ENCODE measurements at regions of chr20 and their contacts with region 1.

Region 1: DNA sequence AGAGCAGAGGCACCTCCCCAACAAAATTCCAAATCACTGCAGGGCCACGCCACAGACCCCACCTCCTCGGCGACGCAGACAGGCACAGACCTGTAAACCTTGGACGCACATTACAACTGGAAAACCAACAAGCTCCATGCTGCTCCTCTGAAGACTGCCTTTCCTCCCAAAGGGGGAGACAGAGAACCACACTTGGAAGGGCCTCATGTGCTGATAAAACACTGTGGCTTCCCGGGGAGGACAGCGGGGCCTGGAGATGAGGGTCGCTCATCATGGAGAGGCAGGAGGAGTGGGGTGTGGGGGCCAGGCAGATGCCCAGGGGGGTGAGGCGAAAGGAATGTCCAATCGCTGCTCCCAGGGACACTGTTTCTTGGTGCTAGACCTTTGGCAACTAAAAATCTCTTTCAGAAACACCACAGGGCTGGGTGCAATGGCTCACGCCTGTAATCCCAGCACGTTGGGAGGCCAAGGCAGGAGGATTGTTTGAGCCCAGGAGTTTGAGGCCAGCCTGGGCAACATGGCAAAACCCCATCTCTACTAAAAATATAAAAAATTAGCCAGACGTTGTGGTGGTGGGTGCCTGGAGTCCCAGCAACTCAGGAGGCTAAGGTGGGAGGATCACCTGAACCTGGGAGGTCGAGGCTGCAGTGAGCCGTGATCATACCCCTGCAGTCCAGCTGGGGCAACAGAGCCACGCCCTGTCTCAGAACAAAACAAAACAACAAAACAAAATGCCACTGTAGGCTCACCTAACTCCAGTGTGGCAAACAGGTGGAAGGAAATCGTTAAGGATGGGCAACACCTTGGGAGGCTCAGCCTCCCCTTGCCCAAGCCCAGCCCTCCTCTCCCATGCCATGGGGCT is 53.8 kb downstream of the ABHD12 start:
- DNase-seq: no peak
- ATAC-seq: peak; percentile 39

Region 2: GRCh38 chr20:25399037-25399430 is 62.2 kb after region 1 on chr20:
- intact Hi-C with region 1: loop called (anchors 2 kb)
- DNase-seq: no peak
- ATAC-seq: peak; percentile 86

Measured in Right ventricle myocardium inferior (tissue), 1 donor.